ENCODE measurements at regions of chr3 and their contacts with region 1.

Region 1: DNA sequence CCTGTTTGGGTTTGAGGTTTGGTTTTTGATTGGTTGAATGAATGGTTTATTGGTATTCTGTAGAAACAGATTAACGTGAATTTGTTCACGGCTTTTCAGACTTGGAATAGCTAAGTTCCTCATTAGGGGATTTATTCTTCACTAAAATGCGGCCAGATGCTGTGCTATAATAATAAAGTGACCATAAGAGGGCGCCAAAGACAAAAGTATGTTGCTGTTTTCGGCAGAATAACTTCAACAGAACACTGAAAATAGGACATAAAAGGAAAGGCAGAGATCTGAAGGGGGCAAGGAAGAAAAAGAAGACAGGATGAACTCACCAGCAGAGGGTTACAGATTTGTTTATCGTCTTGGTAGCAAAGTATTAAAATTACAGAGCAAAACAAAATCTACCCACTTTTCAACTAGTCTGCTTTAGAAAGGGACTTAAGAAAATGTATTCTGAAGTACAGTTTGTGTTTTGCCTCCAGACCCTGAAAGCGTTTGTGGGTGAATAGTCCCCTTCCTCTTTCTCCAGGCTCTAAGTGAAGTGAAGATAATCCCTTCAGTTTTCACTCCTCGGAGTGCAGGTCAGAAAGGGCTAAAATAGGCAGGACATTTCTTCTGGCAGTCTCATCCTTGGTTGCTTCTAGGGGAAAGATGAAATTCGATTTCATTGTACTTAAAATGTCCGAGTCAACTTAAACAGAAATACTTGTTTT is 147.6 kb downstream of the IL20RB start:
- DNase-seq: peak in 4 of 5 donors; percentile 19 to 35 (median 32)
- H3K4me3 ChIP-seq: no peak overlapping the region
- H3K4me3 Mint-ChIP-seq: no peak overlapping the region
- H3K27ac ChIP-seq: no peak overlapping the region
- H3K27ac Mint-ChIP-seq: no peak overlapping the region
- H3K4me1 ChIP-seq: no peaks in the 10 kb centered on the region
- H3K4me1 Mint-ChIP-seq: no peaks in the 10 kb centered on the region
- H3K27me3 ChIP-seq: no peaks in the 10 kb centered on the region
- H3K27me3 Mint-ChIP-seq: peaks cover 16 to 24% of the 10 kb centered on the region in 2 donors

Region 2: DNA sequence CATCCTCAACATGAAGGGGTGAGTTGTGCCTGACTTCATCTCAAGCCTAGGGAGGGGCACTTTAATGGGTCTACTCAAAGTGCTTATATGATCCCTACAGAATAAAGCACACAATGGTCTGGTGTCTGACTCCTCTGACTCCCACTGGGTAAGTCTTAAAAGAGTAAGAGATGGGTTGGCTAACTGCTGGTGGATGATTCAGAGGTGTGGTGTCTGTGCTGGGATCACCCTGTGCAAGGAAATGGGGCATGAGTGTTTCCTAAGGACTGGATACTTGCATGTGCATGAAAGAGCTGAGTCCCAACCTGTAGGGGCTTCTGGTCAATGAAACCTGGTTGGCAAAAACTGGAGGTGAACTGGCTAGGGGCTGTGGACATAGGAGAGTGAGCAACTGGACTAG is 11.2 kb after region 1 on chr3:
- CTCF ChIA-PET with region 1: interaction called, 35 read pairs
- POLR2A ChIA-PET with region 1: no interaction called
- intact Hi-C with region 1: no loop called
- DNase-seq: no peak
- H3K4me3 ChIP-seq: no peak overlapping the region
- H3K4me3 Mint-ChIP-seq: no peak overlapping the region
- H3K27ac ChIP-seq: no peak overlapping the region
- H3K27ac Mint-ChIP-seq: no peak overlapping the region
- H3K4me1 ChIP-seq: no peaks in the 10 kb centered on the region
- H3K4me1 Mint-ChIP-seq: no peaks in the 10 kb centered on the region
- H3K27me3 ChIP-seq: no peaks in the 10 kb centered on the region
- H3K27me3 Mint-ChIP-seq: peaks cover 0 to 13% of the 10 kb centered on the region in 2 donors

Region 3: GRCh38 chr3:137946345-137946973 is 841.0 kb after region 1 on chr3:
- CTCF ChIA-PET with region 1: interaction called, 22 read pairs
- POLR2A ChIA-PET with region 1: no interaction called
- intact Hi-C with region 1: loop called (anchors 1 kb)
- DNase-seq: peak in 4 of 5 donors; percentile 34 to 46 (median 38)
- H3K4me3 ChIP-seq: no peak overlapping the region
- H3K4me3 Mint-ChIP-seq: no peak overlapping the region
- H3K27ac ChIP-seq: no peak overlapping the region
- H3K27ac Mint-ChIP-seq: no peak overlapping the region
- H3K4me1 ChIP-seq: no peaks in the 10 kb centered on the region
- H3K4me1 Mint-ChIP-seq: peaks cover 0 to 2% (median 0%) of the 10 kb centered on the region in 4 donors
- H3K27me3 ChIP-seq: no peaks in the 10 kb centered on the region
- H3K27me3 Mint-ChIP-seq: no peaks in the 10 kb centered on the region

Region 4: DNA sequence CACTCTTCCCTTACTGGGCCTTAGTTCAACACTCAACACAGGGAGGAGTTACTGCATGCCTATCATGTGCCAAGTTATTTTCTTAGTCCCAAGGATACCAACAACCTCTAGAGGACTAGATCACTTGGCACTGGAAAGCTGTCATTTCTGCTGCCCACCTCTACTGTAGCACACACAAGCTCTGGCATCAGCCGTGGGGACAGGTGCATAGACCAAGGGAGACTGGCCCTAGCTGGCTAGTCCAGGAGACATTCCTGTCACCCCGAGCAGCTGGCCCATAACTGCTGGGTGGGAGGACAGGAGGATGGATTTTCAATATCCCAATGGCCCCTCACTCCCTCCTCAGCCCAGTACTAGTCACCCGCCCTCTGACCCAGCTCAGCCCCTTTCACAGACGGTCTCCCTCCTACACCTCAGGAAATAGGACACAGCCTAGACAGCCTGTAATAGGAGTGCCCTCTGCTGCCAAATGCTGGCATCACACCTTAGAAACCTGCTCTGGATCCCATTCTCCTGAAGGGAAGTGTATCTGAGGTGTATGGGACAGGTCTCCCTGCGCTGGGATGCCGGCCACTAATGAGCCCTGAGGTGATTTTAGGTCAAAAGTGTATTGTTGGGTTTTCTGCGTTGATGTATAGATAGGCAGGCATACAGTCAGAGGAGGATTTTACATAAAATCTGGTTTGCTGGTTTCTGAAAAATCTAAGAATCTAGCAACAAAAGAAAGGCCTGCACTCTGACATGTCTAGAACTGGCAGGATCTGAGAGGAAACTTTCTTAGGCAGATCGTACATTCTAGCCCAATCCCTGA is 1013.4 kb after region 1 on chr3:
- CTCF ChIA-PET with region 1: no interaction called
- POLR2A ChIA-PET with region 1: no interaction called
- intact Hi-C with region 1: loop called (anchors 10 kb)
- DNase-seq: peak in 4 of 5 donors; percentile 25 to 37 (median 29)
- H3K4me3 ChIP-seq: no peak overlapping the region
- H3K4me3 Mint-ChIP-seq: no peak overlapping the region
- H3K27ac ChIP-seq: no peak overlapping the region
- H3K27ac Mint-ChIP-seq: no peak overlapping the region
- H3K4me1 ChIP-seq: no peaks in the 10 kb centered on the region
- H3K4me1 Mint-ChIP-seq: peaks cover 0 to 8% (median 3%) of the 10 kb centered on the region in 4 donors
- H3K27me3 ChIP-seq: peaks cover 10% of the 10 kb centered on the region
- H3K27me3 Mint-ChIP-seq: peaks cover 14 to 34% of the 10 kb centered on the region in 2 donors

Measured in CD4-positive, alpha-beta memory T cell (primary cell).